ENCODE measurements at regions of chr5 and their contacts with region 1.

Region 1: DNA sequence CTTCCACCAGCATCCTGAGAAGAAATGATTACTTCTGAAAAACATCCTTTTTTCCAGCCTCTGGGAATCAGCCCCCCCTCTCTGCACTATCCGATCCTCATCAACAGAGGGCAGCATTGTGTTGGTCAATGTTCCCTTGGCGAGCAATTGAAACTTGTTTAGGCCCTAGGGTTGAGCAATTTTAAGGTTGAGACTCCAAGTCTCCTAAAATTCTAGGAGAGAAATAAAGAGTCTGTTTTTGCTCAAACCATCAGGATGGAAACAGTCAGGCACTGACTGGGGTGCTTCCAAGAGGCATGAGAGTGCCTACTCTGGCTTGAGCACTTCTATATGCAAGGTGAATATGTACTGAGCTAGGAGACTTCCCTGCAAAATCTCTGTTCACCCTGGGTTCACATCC is 12.4 kb upstream of the CYFIP2 start:
- DNase-seq: no peak
- ATAC-seq: peak; percentile 0
- H3K4me3 Mint-ChIP-seq: peak overlapping the region; percentile 53
- H3K27ac Mint-ChIP-seq: peak overlapping the region; percentile 94
- H3K4me1 Mint-ChIP-seq: peaks cover 88% of the 10 kb centered on the region
- H3K27me3 Mint-ChIP-seq: no peaks in the 10 kb centered on the region

Region 2: DNA sequence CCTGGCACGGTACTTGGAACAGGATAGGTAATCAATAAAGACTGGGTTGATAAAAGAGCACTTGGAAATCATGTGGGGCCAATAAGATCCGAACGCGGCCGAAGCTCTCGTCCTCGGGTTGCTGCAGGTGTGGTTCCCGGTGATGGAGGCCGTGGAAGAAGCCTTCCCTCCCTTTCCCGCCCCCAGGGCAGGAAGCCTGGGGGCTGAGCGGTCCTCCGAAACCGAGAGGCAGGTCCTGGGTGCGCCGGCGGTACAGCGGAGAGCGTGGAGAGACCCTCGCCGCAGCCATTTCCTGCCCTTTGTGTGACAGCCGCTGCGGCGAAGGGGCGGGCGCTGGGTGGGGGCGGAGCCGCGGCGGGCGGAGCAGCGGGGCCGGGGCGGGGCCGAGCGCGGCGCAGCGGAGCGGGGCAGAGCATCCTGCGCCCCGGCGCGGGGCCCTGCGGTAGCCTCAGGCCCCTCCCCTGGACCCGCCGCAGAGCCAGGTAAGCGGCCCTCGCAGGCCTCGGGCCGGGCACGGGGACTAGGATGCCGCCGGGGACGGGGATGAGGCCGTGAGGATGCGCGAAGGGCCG is 12.3 kb after region 1 on chr5 and contains the start of gene CYFIP2:
- CTCF ChIA-PET with region 1: interaction called, 48 read pairs
- DNase-seq: peak; percentile 92
- ATAC-seq: peak; percentile 85
- H3K4me3 Mint-ChIP-seq: peak within 1 kb of the TSS; percentile 83
- H3K27ac Mint-ChIP-seq: peak within 1 kb of the TSS; percentile 98
- H3K4me1 Mint-ChIP-seq: peaks cover 66% of the 10 kb centered on the region
- H3K27me3 Mint-ChIP-seq: no peaks in the 10 kb centered on the region
- total RNA-seq, gene CYFIP2: 382 to 438 TPM

Region 3: DNA sequence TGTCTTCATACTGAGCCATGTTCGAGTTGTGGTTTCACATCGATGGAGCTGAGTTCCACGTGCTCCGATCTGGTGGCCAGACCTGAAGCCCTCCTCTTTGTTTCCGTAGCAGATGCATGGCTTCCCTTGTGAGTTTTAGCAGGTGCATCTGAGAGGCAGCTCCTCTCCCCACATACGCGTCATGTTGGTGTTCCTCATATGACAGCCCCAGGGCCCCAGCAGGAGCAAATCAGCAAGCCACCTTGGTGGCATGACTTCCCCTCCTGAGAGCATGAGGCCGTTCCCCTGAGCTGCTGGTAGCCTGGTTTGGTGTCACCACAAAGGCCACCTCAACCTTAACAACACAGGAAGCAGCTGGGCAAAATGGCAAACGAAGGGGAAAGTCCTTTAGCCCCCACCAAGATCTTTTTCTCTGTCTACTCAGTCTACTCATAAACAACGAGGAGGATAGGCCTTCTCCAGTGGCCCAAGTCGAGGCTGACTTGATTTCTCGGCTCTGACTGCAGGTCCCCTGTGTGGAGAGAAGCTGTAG is 18.3 kb after region 1 on chr5:
- CTCF ChIA-PET with region 1: interaction called, 48 read pairs
- DNase-seq: peak; percentile 98
- ATAC-seq: peak; percentile 80
- H3K4me3 Mint-ChIP-seq: peak overlapping the region; percentile 64
- H3K27ac Mint-ChIP-seq: peak overlapping the region; percentile 97
- H3K4me1 Mint-ChIP-seq: peaks cover 78% of the 10 kb centered on the region
- H3K27me3 Mint-ChIP-seq: no peaks in the 10 kb centered on the region

Region 4: GRCh38 chr5:157303667-157304327 is 50.2 kb after region 1 on chr5:
- CTCF ChIA-PET with region 1: interaction called, 14 read pairs
- DNase-seq: peak; percentile 64
- ATAC-seq: peak; percentile 46
- H3K4me3 Mint-ChIP-seq: no peak overlapping the region
- H3K27ac Mint-ChIP-seq: peak overlapping the region; percentile 80
- H3K4me1 Mint-ChIP-seq: peaks cover 58% of the 10 kb centered on the region
- H3K27me3 Mint-ChIP-seq: no peaks in the 10 kb centered on the region

Region 5: DNA sequence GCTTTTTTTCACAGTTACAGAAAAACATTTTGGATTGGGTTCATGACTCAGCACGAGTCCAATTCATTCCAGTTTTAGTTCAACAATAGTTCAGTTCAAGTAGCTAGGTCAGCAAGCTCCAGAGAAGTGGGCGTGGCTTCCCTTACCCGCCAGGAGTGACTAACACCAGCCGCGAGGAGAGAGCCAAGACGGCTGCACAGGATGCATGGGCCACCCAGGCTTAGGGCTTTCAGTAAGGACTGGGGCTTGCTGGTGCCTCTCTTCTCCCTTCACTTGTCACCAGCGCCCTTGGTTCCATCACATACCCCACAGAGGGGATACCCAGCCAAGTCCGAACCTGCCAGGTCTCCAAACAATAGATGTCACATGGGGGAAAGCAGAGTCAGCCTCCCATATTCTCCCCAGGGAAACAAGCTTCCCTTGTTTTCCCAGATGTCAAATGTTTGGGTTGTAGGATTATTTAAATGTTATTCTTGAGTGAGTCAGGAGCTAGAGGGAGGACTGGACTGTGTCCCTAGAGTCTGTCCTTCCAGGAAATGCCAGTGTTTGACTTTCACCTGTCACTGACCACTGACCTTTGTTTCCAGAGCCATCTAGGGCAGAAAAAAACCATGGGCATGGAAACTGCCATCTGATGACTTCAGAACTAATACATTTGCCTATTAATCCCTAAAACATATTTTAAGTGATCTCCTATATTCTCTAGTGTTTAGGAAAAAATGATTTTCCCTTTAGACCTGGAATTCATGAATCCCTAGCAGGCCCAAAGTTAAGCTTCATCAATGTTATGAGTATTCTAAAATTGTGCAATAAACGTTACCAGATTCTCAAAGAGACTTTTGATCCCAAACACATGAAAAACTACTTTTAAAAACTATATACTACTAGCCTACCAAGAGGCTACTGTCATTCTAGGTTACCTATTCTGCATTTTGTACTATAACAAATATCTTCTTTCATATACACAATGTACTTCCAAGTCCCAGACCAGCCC is 258.4 kb after region 1 on chr5:
- CTCF ChIA-PET with region 1: no interaction called
- DNase-seq: no peak
- ATAC-seq: peak; percentile 34
- H3K4me3 Mint-ChIP-seq: no peak overlapping the region
- H3K27ac Mint-ChIP-seq: peak overlapping the region; percentile 14
- H3K4me1 Mint-ChIP-seq: peaks cover 40% of the 10 kb centered on the region
- H3K27me3 Mint-ChIP-seq: no peaks in the 10 kb centered on the region

Measured in activated CD8-positive, alpha-beta memory T cell treated with anti-CD3 and anti-CD28 coated beads, Interleukin-2, amount 10 ng/mL, durations not matched to agents 7 days and 5 days (primary cell).